Heart right ventricle (tissue), 16 donors: ENCODE measurements at regions of chr11 and their contacts with region 1.

Region 1: GRCh38 chr11:86620891-86621521 is 51.4 kb downstream of the ME3 start:
- DNase-seq: no peak
- ATAC-seq: peak in 4 of 8 donors; percentile 22 to 57 (median 40)
- H3K4me3 ChIP-seq: no peak overlapping the region
- H3K27ac ChIP-seq: peak overlapping the region in 9 of 10 donors; percentile 23 to 77 (median 45)
- H3K4me1 ChIP-seq: peaks cover 3 to 66% (median 35%) of the 10 kb centered on the region in 9 donors
- H3K27me3 ChIP-seq: no peaks in the 10 kb centered on the region
- CTCF ChIP-seq: no peak

Region 2: DNA sequence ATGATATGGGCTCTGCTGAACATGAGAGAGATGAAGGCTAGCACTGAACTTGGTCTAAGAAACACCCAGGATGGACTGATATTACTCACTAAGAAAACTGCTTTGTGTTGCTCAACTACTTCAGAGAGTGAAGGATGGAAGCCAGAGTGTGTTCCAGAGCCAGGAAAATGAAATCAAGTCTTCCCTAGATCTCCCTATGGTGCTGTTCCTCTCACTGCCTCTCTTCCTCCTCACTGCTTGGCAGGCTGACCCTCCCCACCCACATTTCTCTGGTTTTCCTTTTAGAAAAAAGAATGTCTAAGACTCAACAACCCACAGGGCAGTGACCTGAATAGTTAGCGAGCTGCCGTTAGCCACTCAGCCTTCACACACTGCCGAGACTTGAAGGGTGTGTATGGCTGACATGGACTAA is 180.7 kb before region 1 on chr11:
- intact Hi-C with region 1: loop called in 1 of 10 experiments (anchors 10 kb)
- DNase-seq: peak; percentile 39 to 40
- ATAC-seq: peak; percentile 77 to 89 (median 87)
- H3K4me3 ChIP-seq: no peak overlapping the region
- H3K27ac ChIP-seq: peak overlapping the region in 7 of 10 donors; percentile 21 to 75 (median 66)
- H3K4me1 ChIP-seq: peaks cover 0 to 15% (median 0%) of the 10 kb centered on the region in 9 donors
- H3K27me3 ChIP-seq: no peaks in the 10 kb centered on the region
- CTCF ChIP-seq: no peak

Region 3: DNA sequence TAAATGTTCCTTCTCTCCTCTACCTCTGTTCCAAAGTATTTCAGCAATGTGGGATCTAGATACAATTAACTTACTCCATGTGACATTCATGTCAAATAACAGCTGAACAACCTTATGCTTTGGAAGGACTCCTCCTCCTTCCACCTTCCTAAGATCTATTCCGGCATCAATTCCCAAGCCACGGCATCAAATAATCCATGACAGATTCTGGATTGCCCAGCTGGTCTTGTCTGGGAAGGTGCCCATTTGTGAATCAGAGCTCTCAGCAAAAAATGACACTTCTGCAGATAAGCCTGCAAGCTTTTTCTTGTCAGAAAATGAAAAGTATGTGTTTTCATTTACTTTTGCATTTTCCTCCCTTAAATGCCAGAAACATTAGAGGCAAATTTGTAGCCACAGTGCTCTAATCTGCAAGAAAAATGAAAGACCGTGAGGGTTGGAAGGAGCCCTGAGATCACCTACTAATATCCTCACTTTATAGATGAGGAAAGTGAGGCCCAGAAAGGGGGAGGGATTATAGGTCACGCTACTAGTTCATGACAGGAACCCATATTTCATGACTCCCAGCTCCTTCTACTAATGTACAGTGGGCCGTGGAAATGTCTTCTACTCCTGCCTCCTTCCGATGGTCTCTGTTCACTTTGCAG is 72.6 kb before region 1 on chr11:
- intact Hi-C with region 1: no loop called
- DNase-seq: no peak
- ATAC-seq: peak in 4 of 8 donors; percentile 16 to 27 (median 19)
- H3K4me3 ChIP-seq: no peak overlapping the region
- H3K27ac ChIP-seq: peak overlapping the region; percentile 33 to 83 (median 65)
- H3K4me1 ChIP-seq: peaks cover 7 to 58% (median 33%) of the 10 kb centered on the region in 9 donors
- H3K27me3 ChIP-seq: no peaks in the 10 kb centered on the region
- CTCF ChIP-seq: no peak

Region 4: GRCh38 chr11:86671682-86672621 is 50.9 kb after region 1 on chr11 and contains the start of gene ME3:
- intact Hi-C with region 1: loop called in 1 of 10 experiments (anchors 5 kb)
- DNase-seq: peak; percentile 72 to 73
- ATAC-seq: peak; percentile 80 to 89 (median 86)
- H3K4me3 ChIP-seq: peak within 1 kb of the TSS; percentile 48 to 88 (median 82)
- H3K27ac ChIP-seq: peak within 1 kb of the TSS; percentile 74 to 97 (median 94)
- H3K4me1 ChIP-seq: peaks cover 3 to 62% (median 16%) of the 10 kb centered on the region in 9 donors
- H3K27me3 ChIP-seq: peaks cover 0 to 9% (median 0%) of the 10 kb centered on the region in 7 donors
- CTCF ChIP-seq: peak in 1 of 9 donors; percentile 10
- total RNA-seq, gene ME3: 17.4 to 39.8 (median 33.7) TPM

Region 5: GRCh38 chr11:86743223-86744150 is 122.5 kb after region 1 on chr11:
- intact Hi-C with region 1: no loop called
- DNase-seq: no peak
- ATAC-seq: peak in 6 of 8 donors; percentile 33 to 75 (median 38)
- H3K4me3 ChIP-seq: no peak overlapping the region
- H3K27ac ChIP-seq: peak overlapping the region in 2 of 10 donors; percentile 3 to 62
- H3K4me1 ChIP-seq: peaks cover 10 to 45% (median 25%) of the 10 kb centered on the region in 9 donors
- H3K27me3 ChIP-seq: no peaks in the 10 kb centered on the region
- CTCF ChIP-seq: no peak

Region 6: DNA sequence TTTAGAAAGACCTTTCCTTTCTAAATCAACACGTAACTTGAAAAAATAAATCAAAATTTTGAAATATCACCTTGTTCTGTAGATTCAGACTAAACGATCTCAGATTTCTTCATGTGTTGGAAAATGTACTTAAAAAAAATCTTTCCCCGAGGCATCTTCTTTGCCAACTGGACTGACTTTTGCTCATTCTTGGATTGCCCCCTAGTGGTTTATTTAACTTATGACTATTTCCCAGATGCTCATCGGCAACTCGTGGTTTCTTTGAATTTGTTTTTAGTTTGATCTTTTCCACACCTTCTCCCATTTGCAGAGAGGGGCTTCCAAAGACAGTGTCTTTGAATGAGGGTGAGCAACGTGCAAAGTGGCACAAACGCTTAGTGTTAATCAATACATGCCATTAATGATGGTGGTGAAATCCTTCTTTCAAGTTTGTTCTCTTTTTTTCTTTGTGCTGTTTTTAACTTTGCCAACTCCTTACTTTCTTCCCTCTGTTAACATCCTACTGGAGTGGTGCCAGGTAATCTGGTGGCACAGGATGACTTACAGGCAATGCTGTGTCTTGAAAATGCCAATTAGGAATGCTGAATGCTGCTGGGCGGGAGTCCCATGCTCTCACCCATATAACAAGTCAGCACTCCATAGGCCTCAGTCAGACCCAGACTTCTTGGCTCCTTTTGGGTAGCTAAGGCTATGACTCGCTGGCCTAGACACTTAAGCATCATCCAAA is 197.6 kb after region 1 on chr11:
- intact Hi-C with region 1: loop called in 1 of 10 experiments (anchors 5 kb)
- DNase-seq: peak in 1 of 2 donors; percentile 20
- ATAC-seq: peak in 7 of 8 donors; percentile 35 to 63 (median 45)
- H3K4me3 ChIP-seq: no peak overlapping the region
- H3K27ac ChIP-seq: no peak overlapping the region
- H3K4me1 ChIP-seq: peaks cover 0 to 44% (median 10%) of the 10 kb centered on the region in 9 donors
- H3K27me3 ChIP-seq: no peaks in the 10 kb centered on the region
- CTCF ChIP-seq: peak; percentile 59 to 88 (median 80)